ENCODE measurements at regions of chr11 and their contacts with region 1.

Region 1: DNA sequence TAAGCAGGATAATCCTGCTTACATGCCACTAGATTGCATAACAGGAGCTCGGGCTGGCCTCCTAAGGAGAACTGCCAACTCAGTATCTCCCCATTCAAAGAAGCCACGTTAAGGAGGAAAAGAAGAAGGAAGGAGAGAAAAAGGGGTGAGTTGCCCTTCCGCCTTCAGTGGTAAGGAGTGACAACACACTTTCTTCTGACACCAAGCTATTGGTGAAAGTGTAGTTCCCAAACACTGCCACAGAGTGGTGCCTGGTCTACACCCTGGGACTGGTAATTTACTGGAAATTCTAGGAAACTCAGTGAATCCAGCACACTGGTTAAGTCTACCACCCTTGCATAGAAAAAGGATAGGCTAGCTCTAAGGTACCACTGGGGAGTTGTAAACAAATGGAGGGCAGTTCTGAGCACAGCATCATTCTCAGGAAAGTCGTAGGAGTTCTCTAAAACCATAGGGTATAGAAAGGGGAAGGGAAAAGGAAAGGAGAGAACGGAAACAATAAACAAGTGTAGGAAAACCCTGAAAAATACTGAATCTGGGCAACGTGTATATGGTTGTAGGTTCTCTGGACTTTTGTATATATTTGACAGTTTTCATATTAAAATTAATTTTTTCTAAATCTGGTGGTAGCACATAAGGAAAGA is 58.2 kb downstream of the RRAS2 start:
- DNase-seq: no peak
- ATAC-seq: peak; percentile 92
- H3K4me3 ChIP-seq: no peak overlapping the region
- H3K27ac ChIP-seq: no peak overlapping the region
- H3K4me1 ChIP-seq: peaks cover 4% of the 10 kb centered on the region; the same call in 1 of the 2 replicates
- H3K27me3 ChIP-seq: no peaks in the 10 kb centered on the region
- CTCF ChIP-seq: peak; percentile 77 to 91 (median 88)
- EP300 ChIP-seq: no peak
- POLR2A ChIP-seq: no peak
- RAD21 ChIP-seq: peak; percentile 95

Region 2: GRCh38 chr11:13850231-13851005 is 450.4 kb before region 1 on chr11:
- CTCF ChIA-PET with region 1: no interaction called
- POLR2A ChIA-PET with region 1: no interaction called
- RAD21 ChIA-PET with region 1: no interaction called
- SMC1A ChIA-PET with region 1: no interaction called
- in situ Hi-C with region 1: no loop called
- intact Hi-C with region 1: no loop called
- DNase-seq: no peak
- ATAC-seq: no peak
- H3K4me3 ChIP-seq: no peak overlapping the region
- H3K27ac ChIP-seq: no peak overlapping the region
- H3K4me1 ChIP-seq: no peaks in the 10 kb centered on the region
- H3K27me3 ChIP-seq: no peaks in the 10 kb centered on the region; a peak in 2 of 4 replicates
- CTCF ChIP-seq: no peak
- EP300 ChIP-seq: no peak
- POLR2A ChIP-seq: no peak
- RAD21 ChIP-seq: no peak

Region 3: GRCh38 chr11:14119357-14119756 is 181.4 kb before region 1 on chr11:
- CTCF ChIA-PET with region 1: no interaction called
- POLR2A ChIA-PET with region 1: no interaction called
- RAD21 ChIA-PET with region 1: no interaction called
- SMC1A ChIA-PET with region 1: no interaction called
- in situ Hi-C with region 1: no loop called
- intact Hi-C with region 1: no loop called
- DNase-seq: no peak
- ATAC-seq: no peak
- H3K4me3 ChIP-seq: no peak overlapping the region
- H3K27ac ChIP-seq: no peak overlapping the region
- H3K4me1 ChIP-seq: no peaks in the 10 kb centered on the region
- H3K27me3 ChIP-seq: no peaks in the 10 kb centered on the region
- CTCF ChIP-seq: no peak
- EP300 ChIP-seq: no peak
- POLR2A ChIP-seq: no peak
- RAD21 ChIP-seq: no peak

Region 4: GRCh38 chr11:14223636-14224288 is 77.0 kb before region 1 on chr11:
- CTCF ChIA-PET with region 1: no interaction called
- POLR2A ChIA-PET with region 1: no interaction called
- RAD21 ChIA-PET with region 1: no interaction called
- SMC1A ChIA-PET with region 1: no interaction called
- in situ Hi-C with region 1: no loop called
- intact Hi-C with region 1: no loop called
- DNase-seq: no peak
- ATAC-seq: no peak
- H3K4me3 ChIP-seq: no peak overlapping the region
- H3K27ac ChIP-seq: no peak overlapping the region
- H3K4me1 ChIP-seq: no peaks in the 10 kb centered on the region
- H3K27me3 ChIP-seq: no peaks in the 10 kb centered on the region; a peak in 2 of 4 replicates
- CTCF ChIP-seq: no peak
- EP300 ChIP-seq: no peak
- POLR2A ChIP-seq: no peak
- RAD21 ChIP-seq: no peak

Region 5: DNA sequence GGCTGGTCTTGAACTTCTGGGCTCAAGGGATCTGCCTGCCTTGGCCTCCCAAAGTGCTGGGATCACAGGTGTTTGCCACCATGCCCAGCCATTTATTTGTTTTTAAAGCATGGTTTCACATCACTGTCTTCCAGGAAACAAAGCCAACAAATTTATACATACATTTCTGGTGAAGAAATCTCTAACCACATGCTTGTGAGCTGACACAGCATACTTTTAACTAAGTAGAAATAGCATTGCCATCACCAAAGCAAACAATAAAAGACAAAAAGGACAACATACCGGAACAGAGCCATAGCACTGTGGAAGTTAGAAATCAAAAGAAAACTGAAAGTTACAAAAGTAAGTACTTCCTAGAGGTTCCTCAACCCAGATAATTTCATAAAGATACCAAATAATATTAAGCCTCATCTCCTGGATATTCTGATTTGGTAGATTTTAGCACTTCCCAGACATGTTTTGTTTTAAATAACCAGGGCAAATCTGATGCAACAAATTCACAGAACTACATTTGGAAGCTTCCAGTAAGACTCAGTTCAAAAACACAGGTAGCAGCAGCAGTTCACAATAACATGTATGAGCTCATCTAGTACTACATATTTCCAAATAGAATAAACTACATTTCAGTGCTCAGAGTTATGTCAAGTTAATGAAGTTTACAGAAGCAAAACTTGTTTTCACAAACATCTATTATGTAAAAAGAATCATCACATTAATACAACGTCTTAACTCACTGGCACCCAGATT is 12.4 kb before region 1 on chr11:
- CTCF ChIA-PET with region 1: interaction called, 12 read pairs
- POLR2A ChIA-PET with region 1: no interaction called
- RAD21 ChIA-PET with region 1: interaction called, 6 read pairs
- SMC1A ChIA-PET with region 1: interaction called, 5 read pairs
- in situ Hi-C with region 1: no loop called
- intact Hi-C with region 1: no loop called
- DNase-seq: no peak
- ATAC-seq: no peak
- H3K4me3 ChIP-seq: no peak overlapping the region
- H3K27ac ChIP-seq: no peak overlapping the region
- H3K4me1 ChIP-seq: no peaks in the 10 kb centered on the region
- H3K27me3 ChIP-seq: no peaks in the 10 kb centered on the region
- CTCF ChIP-seq: no peak
- EP300 ChIP-seq: no peak
- POLR2A ChIP-seq: no peak
- RAD21 ChIP-seq: no peak

Region 6: DNA sequence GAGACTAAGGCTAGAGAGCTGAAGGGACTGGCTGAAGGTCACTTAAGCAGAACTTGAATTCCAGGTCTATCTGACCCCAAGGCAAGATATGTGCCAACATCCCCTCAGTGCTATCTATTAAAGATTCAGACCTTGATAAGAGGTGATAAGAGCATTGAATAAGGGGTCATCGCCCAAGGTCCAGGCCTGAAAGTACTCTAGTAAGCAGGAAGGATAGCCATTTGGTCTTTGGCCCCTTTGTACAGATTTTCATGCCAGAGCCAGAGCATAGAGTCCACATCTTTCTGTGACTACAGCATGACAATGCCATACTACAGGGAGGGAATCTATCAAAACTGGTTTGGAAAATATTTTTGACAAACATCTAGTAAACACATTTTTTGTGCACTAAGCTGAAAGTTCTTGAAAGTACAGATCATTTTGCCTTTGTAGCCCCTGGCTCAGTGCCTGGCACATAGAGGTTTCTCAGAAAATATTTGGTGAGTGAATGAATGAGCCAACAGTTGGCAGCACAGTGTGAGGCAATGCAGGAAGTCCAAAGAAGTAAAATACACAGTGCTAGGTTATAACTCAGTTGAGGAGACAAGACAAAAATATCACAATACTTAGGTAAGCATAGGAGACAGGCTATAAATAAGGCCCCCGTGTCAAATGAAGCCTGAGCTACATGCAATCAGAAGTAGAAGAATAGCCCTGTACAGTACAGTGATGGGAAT is 73.3 kb after region 1 on chr11:
- CTCF ChIA-PET with region 1: interaction called, 17 read pairs
- POLR2A ChIA-PET with region 1: no interaction called
- RAD21 ChIA-PET with region 1: interaction called, 10 read pairs
- SMC1A ChIA-PET with region 1: interaction called, 16 read pairs
- in situ Hi-C with region 1: no loop called
- intact Hi-C with region 1: no loop called
- DNase-seq: no peak
- ATAC-seq: no peak
- H3K4me3 ChIP-seq: no peak overlapping the region
- H3K27ac ChIP-seq: no peak overlapping the region
- H3K4me1 ChIP-seq: peaks cover 7% of the 10 kb centered on the region
- H3K27me3 ChIP-seq: no peaks in the 10 kb centered on the region
- CTCF ChIP-seq: no peak
- EP300 ChIP-seq: no peak
- POLR2A ChIP-seq: no peak
- RAD21 ChIP-seq: no peak

Region 7: GRCh38 chr11:14422052-14422813 is 121.5 kb after region 1 on chr11:
- CTCF ChIA-PET with region 1: interaction called, 271 read pairs
- POLR2A ChIA-PET with region 1: no interaction called
- RAD21 ChIA-PET with region 1: interaction called, 123 read pairs
- SMC1A ChIA-PET with region 1: interaction called, 120 read pairs
- in situ Hi-C with region 1: no loop called
- intact Hi-C with region 1: loop called (anchors 1 kb)
- DNase-seq: no peak
- ATAC-seq: no peak
- H3K4me3 ChIP-seq: no peak overlapping the region
- H3K27ac ChIP-seq: no peak overlapping the region
- H3K4me1 ChIP-seq: no peaks in the 10 kb centered on the region
- H3K27me3 ChIP-seq: no peaks in the 10 kb centered on the region
- CTCF ChIP-seq: no peak
- EP300 ChIP-seq: no peak
- POLR2A ChIP-seq: no peak
- RAD21 ChIP-seq: no peak

Region 8: DNA sequence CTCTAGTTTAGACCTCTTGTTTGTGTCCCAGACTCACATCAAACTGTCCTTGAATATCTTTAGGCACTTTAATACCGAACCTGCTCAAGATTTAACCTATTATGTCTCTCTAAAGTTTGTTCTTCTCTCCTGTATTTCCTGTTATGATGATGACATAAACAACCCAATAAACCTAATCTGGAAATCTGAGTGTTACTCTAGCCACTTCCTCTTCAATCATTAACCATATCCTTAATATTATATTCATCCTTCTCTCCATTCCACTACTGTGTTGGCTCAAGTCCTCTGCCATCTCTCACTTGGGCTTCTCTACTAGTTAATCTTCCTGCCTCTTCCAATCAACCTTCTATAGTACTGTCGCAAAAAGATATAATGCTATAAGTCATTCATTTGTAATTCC is 162.8 kb after region 1 on chr11:
- CTCF ChIA-PET with region 1: interaction called, 238 read pairs
- POLR2A ChIA-PET with region 1: no interaction called
- RAD21 ChIA-PET with region 1: no interaction called
- SMC1A ChIA-PET with region 1: interaction called, 4 read pairs
- in situ Hi-C with region 1: no loop called
- intact Hi-C with region 1: no loop called
- DNase-seq: no peak
- ATAC-seq: no peak
- H3K4me3 ChIP-seq: no peak overlapping the region
- H3K27ac ChIP-seq: no peak overlapping the region
- H3K4me1 ChIP-seq: no peaks in the 10 kb centered on the region
- H3K27me3 ChIP-seq: no peaks in the 10 kb centered on the region
- CTCF ChIP-seq: no peak
- EP300 ChIP-seq: no peak
- POLR2A ChIP-seq: no peak
- RAD21 ChIP-seq: no peak